Activated CD8-positive, alpha-beta T cell treated with anti-CD3 and anti-CD28 coated beads for 36 hours (primary cell): ENCODE measurements at regions of chr6 and their contacts with region 1.

Region 1: GRCh38 chr6:107847844-107848802 is 24.0 kb upstream of the SCML4 start:
- DNase-seq: peak; percentile 83
- ATAC-seq: peak; percentile 86
- H3K4me3 Mint-ChIP-seq: peak overlapping the region; percentile 72
- H3K27ac Mint-ChIP-seq: peak overlapping the region; percentile 69
- H3K4me1 Mint-ChIP-seq: peaks cover 20% of the 10 kb centered on the region
- H3K27me3 Mint-ChIP-seq: peaks cover 1% of the 10 kb centered on the region
- CTCF ChIP-seq: peak; percentile 95

Region 2: DNA sequence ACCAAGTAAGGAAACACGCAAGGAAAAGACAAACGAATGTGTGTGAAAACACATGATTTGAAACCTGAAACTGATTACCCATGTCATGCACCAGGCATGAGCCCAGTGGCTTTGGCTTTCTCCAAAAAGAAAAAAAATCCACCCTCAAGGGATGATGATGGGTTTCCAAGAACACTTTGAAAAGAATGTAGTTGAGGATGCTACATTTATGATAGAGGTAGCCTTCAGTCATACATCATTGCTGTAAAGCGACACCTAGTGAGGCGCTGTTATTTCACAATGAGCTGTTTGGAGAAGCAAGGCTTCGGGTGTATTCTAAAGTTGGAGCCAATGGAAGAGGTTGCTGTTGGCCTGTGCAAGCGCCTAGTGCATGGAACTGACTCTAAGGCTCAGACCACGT is 148.9 kb before region 1 on chr6:
- CTCF ChIA-PET with region 1: interaction called, 32 read pairs
- POLR2A ChIA-PET with region 1: no interaction called
- intact Hi-C with region 1: no loop called
- DNase-seq: no peak
- ATAC-seq: no peak
- H3K4me3 Mint-ChIP-seq: no peak overlapping the region
- H3K27ac Mint-ChIP-seq: no peak overlapping the region
- H3K4me1 Mint-ChIP-seq: peaks cover 21% of the 10 kb centered on the region
- H3K27me3 Mint-ChIP-seq: no peaks in the 10 kb centered on the region
- CTCF ChIP-seq: no peak

Region 3: DNA sequence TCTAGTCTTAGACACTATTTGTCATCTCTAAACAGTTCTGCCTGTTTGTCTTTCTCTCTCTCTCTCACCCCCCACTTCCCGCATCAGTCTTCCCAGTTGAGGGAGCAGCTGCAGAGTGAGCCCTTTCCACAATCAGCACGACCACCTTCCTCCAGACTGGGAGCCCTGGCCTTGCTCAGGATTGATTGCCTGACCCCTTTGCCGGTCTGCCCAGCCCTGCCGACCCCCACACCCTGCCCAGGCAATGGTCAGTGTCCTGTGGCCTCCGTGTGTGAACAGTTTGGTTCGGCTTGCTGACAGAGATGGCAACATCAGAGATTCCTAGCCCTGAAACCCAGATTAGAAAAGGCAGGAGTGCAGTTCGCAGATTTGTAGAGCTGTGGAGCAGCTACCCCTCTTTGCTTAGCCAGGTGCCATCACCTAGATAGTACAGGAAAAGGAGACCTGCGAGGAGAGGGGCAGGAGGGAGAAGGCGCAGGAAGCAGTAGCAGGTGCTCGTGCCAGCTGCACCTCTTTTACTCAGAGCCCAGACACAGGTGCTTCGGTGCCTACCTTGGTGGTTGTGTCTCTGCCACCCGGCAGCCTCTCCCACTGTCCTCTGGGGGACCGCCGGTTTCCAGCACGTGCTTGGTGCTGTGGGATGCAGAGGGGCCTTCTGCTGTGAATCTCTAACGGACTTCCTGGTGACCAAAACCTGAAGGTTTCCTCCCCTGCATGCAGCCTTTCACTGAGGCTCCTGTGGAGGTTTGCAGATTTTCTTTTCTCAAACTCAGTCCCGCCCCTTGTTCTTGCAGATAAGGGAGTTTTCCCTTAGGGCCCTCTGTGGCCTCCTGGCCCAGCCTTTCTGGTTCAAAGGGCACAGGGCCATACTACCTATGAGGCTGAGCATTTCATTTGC is 116.5 kb before region 1 on chr6:
- CTCF ChIA-PET with region 1: interaction called, 139 read pairs
- POLR2A ChIA-PET with region 1: interaction called, 10 read pairs
- intact Hi-C with region 1: loop called (anchors 5 kb)
- DNase-seq: peak; percentile 50
- ATAC-seq: peak; percentile 51
- H3K4me3 Mint-ChIP-seq: peak overlapping the region; percentile 89
- H3K27ac Mint-ChIP-seq: peak overlapping the region; percentile 90
- H3K4me1 Mint-ChIP-seq: peaks cover 70% of the 10 kb centered on the region
- H3K27me3 Mint-ChIP-seq: no peaks in the 10 kb centered on the region
- CTCF ChIP-seq: no peak

Region 4: GRCh38 chr6:107769053-107769658 is 79.0 kb before region 1 on chr6:
- CTCF ChIA-PET with region 1: interaction called, 13 read pairs
- POLR2A ChIA-PET with region 1: no interaction called
- intact Hi-C with region 1: no loop called
- DNase-seq: no peak
- ATAC-seq: no peak
- H3K4me3 Mint-ChIP-seq: no peak overlapping the region
- H3K27ac Mint-ChIP-seq: no peak overlapping the region
- H3K4me1 Mint-ChIP-seq: peaks cover 39% of the 10 kb centered on the region
- H3K27me3 Mint-ChIP-seq: no peaks in the 10 kb centered on the region
- CTCF ChIP-seq: no peak

Region 5: GRCh38 chr6:107793191-107793590 is 54.9 kb before region 1 on chr6:
- CTCF ChIA-PET with region 1: interaction called, 26 read pairs
- POLR2A ChIA-PET with region 1: no interaction called
- intact Hi-C with region 1: no loop called
- DNase-seq: no peak
- ATAC-seq: no peak
- H3K4me3 Mint-ChIP-seq: peak overlapping the region; percentile 12
- H3K27ac Mint-ChIP-seq: peak overlapping the region; percentile 63
- H3K4me1 Mint-ChIP-seq: peaks cover 76% of the 10 kb centered on the region
- H3K27me3 Mint-ChIP-seq: no peaks in the 10 kb centered on the region
- CTCF ChIP-seq: no peak

Region 6: GRCh38 chr6:107820338-107821261 is 27.5 kb before region 1 on chr6:
- CTCF ChIA-PET with region 1: interaction called, 52 read pairs
- POLR2A ChIA-PET with region 1: interaction called, 26 read pairs
- intact Hi-C with region 1: no loop called
- DNase-seq: peak; percentile 58
- ATAC-seq: peak; percentile 7
- H3K4me3 Mint-ChIP-seq: peak overlapping the region; percentile 88
- H3K27ac Mint-ChIP-seq: peak overlapping the region; percentile 94
- H3K4me1 Mint-ChIP-seq: peaks cover 82% of the 10 kb centered on the region
- H3K27me3 Mint-ChIP-seq: no peaks in the 10 kb centered on the region
- CTCF ChIP-seq: no peak

Region 7: GRCh38 chr6:108052706-108053105 is 204.6 kb after region 1 on chr6:
- CTCF ChIA-PET with region 1: interaction called, 13 read pairs
- POLR2A ChIA-PET with region 1: no interaction called
- intact Hi-C with region 1: no loop called
- DNase-seq: no peak
- ATAC-seq: no peak
- H3K4me3 Mint-ChIP-seq: no peak overlapping the region
- H3K27ac Mint-ChIP-seq: no peak overlapping the region
- H3K4me1 Mint-ChIP-seq: no peaks in the 10 kb centered on the region
- H3K27me3 Mint-ChIP-seq: no peaks in the 10 kb centered on the region
- CTCF ChIP-seq: no peak